Transverse colon (tissue), 4 donors: ENCODE measurements at regions of chr1 and their contacts with region 1.

Region 1: DNA sequence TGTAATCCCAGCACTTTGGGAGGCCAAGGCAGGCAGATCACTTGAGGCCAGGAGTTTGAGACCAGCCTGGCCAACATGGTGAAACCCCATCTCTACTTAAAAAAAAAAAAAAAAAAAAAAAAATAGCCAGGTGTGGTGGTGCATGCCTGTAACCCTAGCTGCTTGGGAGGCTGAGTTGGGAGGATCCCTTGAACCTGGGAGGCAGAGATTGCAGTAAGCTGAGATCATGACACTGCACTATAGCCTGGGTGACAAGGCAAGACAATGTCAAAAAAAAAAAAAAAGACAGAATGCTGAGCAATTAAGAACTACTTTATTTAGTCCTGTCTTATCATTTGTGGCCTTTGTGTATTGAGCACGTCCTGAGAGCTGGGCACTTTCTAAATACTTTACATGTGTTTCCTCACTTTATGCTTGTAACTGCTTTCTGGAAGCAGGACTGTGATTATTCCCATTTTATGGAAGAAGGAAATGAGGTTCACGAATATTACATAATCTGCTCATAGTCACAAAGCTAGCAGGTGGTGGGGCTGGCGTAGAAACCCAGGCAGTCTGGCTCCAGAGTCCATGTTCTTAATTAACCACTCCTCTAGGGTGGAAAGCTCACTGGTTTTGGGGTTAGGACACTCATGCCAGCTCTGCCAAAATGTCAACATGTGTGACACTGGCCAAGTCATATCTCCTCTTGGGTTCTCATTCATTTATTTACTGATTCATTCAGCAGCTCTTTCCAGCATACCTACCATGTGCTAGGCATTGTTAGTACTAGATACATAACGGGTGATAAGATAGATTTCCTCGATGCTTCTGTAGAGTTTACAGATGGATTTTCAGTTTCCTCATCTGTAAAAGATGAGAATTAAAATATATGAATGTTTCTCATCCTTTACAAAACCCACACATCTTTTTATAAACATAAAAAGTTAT is 57.7 kb downstream of the DDR2 start:
- DNase-seq: no peak
- H3K4me3 ChIP-seq: no peak overlapping the region
- H3K27ac ChIP-seq: peak overlapping the region; percentile 61 to 87 (median 77)
- H3K4me1 ChIP-seq: peaks cover 0 to 39% (median 16%) of the 10 kb centered on the region in 4 donors
- H3K27me3 ChIP-seq: no peaks in the 10 kb centered on the region
- CTCF ChIP-seq: no peak
- EP300 ChIP-seq: no peak
- POLR2A ChIP-seq: no peak

Region 2: GRCh38 chr1:162633081-162633762 is 56.8 kb before region 1 on chr1:
- in situ Hi-C with region 1: no loop called
- intact Hi-C with region 1: loop called (anchors 5 kb)
- DNase-seq: no peak
- H3K4me3 ChIP-seq: peak overlapping the region; percentile 18 to 51 (median 25)
- H3K27ac ChIP-seq: peak overlapping the region; percentile 81 to 89 (median 87)
- H3K4me1 ChIP-seq: peaks cover 0 to 20% (median 0%) of the 10 kb centered on the region in 4 donors
- H3K27me3 ChIP-seq: no peaks in the 10 kb centered on the region
- CTCF ChIP-seq: no peak
- EP300 ChIP-seq: no peak
- POLR2A ChIP-seq: no peak

Region 3: DNA sequence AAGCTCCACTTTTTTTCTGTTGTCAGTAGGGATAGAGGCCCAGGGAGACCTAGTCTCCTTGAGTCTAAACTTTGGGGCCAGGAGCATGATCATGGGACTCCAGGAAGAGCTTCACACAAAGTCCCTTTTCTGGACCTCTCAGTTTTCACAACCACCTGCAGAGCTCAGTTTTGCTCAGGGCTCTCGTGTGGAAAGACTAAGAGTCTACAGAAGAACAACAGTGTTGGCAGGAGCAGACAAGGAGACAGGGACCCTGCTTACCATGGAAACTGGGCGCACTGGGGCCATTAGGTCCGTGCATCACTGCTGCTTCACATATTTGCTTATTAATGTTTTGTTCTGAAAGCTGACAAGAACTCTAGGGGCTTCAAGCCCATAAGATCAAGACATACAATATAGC is 36.5 kb after region 1 on chr1:
- in situ Hi-C with region 1: no loop called
- intact Hi-C with region 1: loop called (anchors 5 kb)
- DNase-seq: no peak
- H3K4me3 ChIP-seq: no peak overlapping the region
- H3K27ac ChIP-seq: peak overlapping the region in 3 of 4 donors; percentile 26 to 40 (median 29)
- H3K4me1 ChIP-seq: peaks cover 0 to 27% (median 6%) of the 10 kb centered on the region in 4 donors
- H3K27me3 ChIP-seq: no peaks in the 10 kb centered on the region
- CTCF ChIP-seq: no peak
- EP300 ChIP-seq: no peak
- POLR2A ChIP-seq: no peak